Activated naive CD4-positive, alpha-beta T cell treated with anti-CD3 and anti-CD28 coated beads for 36 hours (primary cell): ENCODE measurements at regions of chr9 and their contacts with region 1.

Region 1: DNA sequence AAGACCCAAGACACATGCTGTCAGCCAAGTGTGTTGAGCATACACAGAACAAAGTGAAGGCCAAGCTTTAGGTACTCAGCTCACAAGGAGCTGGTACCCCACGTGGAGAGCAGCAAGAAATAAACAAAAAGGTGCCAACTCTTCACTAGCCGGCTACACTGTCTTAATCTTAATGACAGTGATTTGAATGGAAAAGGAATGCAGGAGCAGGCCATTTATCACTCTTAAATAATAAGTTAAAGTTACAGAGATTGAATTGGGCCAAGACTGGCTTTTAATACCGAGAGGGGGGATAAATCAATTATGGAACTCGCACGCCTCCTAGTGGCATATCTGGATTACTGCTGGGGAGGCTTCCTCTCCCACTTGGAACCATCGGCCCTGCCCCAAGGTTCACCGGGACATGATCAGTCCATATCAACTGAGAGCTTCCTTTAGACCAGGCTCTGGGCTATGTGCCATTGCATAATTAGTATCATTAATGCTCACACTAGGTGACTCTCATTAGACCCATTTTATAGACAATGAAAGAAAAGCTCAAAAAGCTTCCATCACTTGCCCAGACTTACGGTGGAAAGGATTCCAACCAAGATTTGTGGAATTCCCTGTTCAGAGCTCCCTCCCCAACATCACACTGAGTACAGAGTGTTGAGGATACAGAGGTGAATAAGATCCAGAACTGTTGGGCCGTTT is 94.0 kb downstream of the ACTL7B start:
- DNase-seq: peak; percentile 58
- H3K4me3 Mint-ChIP-seq: no peak overlapping the region
- H3K27ac Mint-ChIP-seq: no peak overlapping the region
- H3K4me1 Mint-ChIP-seq: peaks cover 2% of the 10 kb centered on the region
- H3K27me3 Mint-ChIP-seq: peaks cover 5% of the 10 kb centered on the region

Region 2: GRCh38 chr9:107425101-107426045 is 1336.4 kb before region 1 on chr9:
- CTCF ChIA-PET with region 1: no interaction called
- intact Hi-C with region 1: loop called (anchors 10 kb)
- DNase-seq: peak; percentile 58
- H3K4me3 Mint-ChIP-seq: peak overlapping the region; percentile 39
- H3K27ac Mint-ChIP-seq: no peak overlapping the region
- H3K4me1 Mint-ChIP-seq: peaks cover 8% of the 10 kb centered on the region
- H3K27me3 Mint-ChIP-seq: peaks cover 23% of the 10 kb centered on the region

Region 3: GRCh38 chr9:107465467-107466451 is 1296.0 kb before region 1 on chr9:
- CTCF ChIA-PET with region 1: no interaction called
- intact Hi-C with region 1: loop called (anchors 5 kb)
- DNase-seq: peak; percentile 41
- H3K4me3 Mint-ChIP-seq: peak overlapping the region; percentile 16
- H3K27ac Mint-ChIP-seq: no peak overlapping the region
- H3K4me1 Mint-ChIP-seq: peaks cover 7% of the 10 kb centered on the region
- H3K27me3 Mint-ChIP-seq: peaks cover 36% of the 10 kb centered on the region

Region 4: DNA sequence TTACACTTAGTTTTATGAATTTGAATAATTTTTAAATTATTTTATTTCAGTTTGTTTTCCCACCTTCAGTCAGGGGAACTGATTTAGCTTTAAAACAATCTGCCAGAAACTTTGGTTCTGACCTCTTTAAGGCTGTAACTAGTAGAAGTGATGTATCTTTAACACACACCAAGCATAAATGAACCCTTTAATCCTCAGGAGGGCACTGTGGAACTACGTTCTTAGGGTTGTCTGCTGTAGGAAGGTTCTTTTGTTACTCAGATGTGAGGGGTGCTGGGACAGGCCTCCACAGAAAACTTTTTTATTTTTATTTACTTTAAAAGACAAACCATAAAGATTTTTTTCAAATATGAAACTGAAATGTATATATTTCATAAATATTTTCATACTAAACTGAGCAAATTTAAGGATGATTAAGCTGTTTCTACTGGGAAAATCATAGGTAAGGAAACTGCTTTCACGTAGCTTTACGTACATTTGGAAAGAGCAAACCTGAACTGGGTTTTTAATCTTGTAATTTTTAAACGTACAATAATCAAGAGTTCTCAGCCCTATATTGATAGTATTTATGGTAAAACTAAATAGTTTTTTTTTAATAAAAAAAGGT is 1277.6 kb before region 1 on chr9:
- CTCF ChIA-PET with region 1: no interaction called
- intact Hi-C with region 1: loop called (anchors 5 kb)
- DNase-seq: peak; percentile 23
- H3K4me3 Mint-ChIP-seq: no peak overlapping the region
- H3K27ac Mint-ChIP-seq: no peak overlapping the region
- H3K4me1 Mint-ChIP-seq: no peaks in the 10 kb centered on the region
- H3K27me3 Mint-ChIP-seq: peaks cover 33% of the 10 kb centered on the region

Region 5: DNA sequence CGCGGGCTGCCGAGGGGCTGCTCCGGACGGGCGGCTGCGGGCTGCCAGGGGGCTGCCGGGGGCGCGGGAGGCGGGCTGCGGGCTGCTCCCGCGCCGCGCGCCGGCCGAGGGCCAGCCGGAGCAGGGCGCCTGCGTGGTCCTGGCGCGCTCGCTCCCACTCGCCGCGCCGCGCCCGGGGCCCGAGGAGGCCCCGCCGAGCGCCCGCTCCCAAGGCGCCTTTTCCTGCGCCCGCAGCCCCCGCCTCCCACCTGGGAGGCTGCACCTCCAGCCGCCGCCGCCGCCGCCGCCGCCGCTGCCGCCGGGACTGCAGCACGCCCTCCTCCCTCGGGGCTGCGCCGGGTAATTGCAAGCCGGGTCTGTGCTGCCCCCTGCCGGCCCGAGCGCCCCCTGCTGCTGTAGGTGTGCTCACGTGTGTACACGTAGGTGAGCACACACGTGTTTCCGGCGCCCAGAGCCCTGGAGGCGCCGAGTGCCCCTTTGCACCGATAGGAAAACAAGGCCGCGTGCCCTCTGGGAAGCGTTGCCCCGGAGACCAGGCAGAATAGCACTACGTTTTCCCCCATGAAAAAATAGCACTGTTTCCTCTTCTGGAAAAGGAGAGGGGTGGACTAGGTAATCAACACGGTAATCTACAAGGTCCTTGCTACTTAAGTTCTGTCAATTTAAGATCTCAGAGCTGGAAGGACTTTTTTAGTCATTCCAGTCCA is 559.1 kb after region 1 on chr9 and contains the start of gene EPB41L4B:
- CTCF ChIA-PET with region 1: no interaction called
- intact Hi-C with region 1: loop called (anchors 10 kb)
- DNase-seq: peak; percentile 95
- H3K4me3 Mint-ChIP-seq: peak within 1 kb of the TSS; percentile 69
- H3K27ac Mint-ChIP-seq: no peak within 1 kb of the TSS
- H3K4me1 Mint-ChIP-seq: peaks cover 10% of the 10 kb centered on the region
- H3K27me3 Mint-ChIP-seq: peaks cover 50% of the 10 kb centered on the region
- total RNA-seq, gene EPB41L4B: 0.24 to 0.25 TPM